ENCODE measurements at regions of chr1 and their contacts with region 1.

Region 1: DNA sequence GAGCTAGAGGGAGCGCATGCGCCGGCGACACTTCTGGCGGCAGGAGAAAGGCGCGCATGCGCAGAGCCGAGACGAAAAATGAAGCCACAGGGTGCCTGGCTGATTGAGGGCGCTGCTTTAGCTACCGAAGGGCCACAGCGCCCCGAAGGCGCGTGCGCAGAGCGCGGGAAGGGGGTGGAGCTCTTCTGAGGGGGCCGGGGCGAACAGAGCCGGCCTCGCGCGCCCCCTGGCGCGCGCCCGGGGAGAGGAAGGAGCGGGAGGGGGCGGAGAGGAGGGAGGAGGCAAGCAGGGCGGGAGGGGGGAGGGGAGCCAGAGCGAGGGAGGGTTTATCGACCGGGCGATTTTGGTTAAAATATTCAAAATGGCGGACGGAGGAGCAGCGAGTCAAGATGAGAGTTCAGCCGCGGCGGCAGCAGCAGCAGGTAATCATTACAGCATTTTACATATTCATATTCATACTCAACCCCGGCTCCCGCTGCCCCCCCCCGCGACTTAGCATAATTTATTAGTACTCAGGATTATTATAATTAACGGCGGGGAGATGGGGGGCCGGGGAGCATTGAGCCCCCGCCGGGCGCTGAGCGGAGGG is at the start of gene POU2F1:
- DNase-seq: peak; percentile 99
- H3K4me3 Mint-ChIP-seq: peak within 1 kb of the TSS; percentile 98
- H3K27ac Mint-ChIP-seq: peak within 1 kb of the TSS; percentile 99
- H3K4me1 Mint-ChIP-seq: peaks cover 37% of the 10 kb centered on the region
- H3K27me3 Mint-ChIP-seq: peaks cover 2% of the 10 kb centered on the region
- total RNA-seq, gene POU2F1: 17.2 and 17.5 TPM in 2 replicates

Region 2: DNA sequence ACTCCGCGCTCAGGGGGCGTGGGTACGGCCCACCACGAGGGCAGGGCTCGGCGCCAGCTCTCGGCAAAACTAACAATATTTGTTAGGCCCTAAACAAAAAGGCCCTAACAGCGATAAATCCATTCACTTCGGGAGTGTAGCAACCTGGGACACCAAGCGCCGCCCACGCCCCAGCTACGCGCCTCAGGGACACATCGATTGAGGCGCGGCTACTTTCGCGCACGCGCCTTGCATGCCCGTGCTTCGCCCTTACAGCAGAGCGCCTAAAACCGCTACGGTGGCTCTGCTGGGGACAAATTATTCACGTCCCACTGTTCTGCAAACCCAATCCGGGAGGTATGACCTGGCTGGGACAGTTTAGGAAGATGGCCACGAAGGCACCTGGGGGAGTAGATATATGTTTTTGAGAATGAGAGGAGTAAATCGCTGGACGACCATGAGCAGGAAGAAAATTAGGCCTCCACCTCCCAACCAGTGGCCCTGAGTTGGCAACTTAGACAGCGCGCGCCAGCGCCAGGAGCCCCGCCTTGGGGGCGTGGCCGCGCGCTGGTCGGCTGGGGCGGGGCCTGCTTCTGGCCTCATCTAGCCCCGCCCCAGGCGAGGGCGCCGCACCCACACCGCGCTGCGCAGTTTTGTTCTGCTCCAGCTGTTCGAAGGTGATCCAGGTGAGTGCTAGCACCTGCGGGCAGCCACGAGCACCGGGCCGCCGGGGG is 1589.8 kb before region 1 on chr1 and contains the start of gene MGST3:
- intact Hi-C with region 1: loop called (anchors 2 kb)
- DNase-seq: peak; percentile 98
- H3K4me3 Mint-ChIP-seq: no peak within 1 kb of the TSS
- H3K27ac Mint-ChIP-seq: no peak within 1 kb of the TSS
- H3K4me1 Mint-ChIP-seq: peaks cover 17% of the 10 kb centered on the region
- H3K27me3 Mint-ChIP-seq: peaks cover 10% of the 10 kb centered on the region
- total RNA-seq, gene MGST3: 25.7 and 28.1 TPM in 2 replicates

Region 3: GRCh38 chr1:166975361-166976129 is 245.1 kb before region 1 on chr1 and contains the start of gene ILDR2:
- intact Hi-C with region 1: loop called (anchors 5 kb)
- DNase-seq: peak; percentile 87
- H3K4me3 Mint-ChIP-seq: peak within 1 kb of the TSS; percentile 96
- H3K27ac Mint-ChIP-seq: peak within 1 kb of the TSS; percentile 96
- H3K4me1 Mint-ChIP-seq: peaks cover 47% of the 10 kb centered on the region
- H3K27me3 Mint-ChIP-seq: peaks cover 32% of the 10 kb centered on the region
- total RNA-seq, gene ILDR2: 10.3 and 12.5 TPM in 2 replicates

Region 4: DNA sequence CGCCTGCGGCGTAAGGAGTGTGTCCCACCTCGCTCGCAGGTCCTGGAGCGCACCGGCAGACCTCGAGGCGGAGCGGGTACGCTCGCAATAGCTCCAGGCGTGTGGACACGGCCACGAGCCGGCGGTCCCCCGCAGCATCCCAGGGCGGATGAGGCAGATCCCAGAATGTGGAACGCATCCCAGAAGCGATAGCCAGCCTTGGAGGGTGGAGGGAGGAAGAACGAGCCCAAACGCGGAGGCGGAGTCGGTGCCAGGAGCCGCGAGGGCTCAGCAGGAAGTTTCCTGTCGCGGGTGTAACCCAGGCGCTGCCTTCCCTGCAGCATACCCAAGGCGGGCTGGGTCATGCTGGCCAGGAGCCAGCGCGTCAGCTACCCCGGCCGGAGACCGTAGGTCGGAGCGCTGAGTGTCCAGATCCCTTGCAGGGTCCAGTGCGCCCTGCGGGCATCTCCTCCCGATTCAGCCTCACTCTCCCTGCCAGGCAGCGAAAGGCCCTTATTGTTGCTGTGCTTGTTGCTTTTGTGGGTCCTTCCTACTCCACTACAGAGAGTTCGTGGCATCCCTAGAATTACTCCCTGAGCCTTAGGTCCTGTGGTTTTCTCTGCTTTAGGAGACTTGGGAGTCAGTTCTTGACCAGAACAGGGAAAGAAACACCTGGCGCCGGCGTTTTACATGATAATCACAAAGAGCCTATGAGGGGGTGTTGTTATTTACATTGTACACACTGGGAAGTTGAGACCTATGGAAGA is 99.1 kb before region 1 on chr1:
- intact Hi-C with region 1: loop called (anchors 5 kb)
- DNase-seq: peak; percentile 78
- H3K4me3 Mint-ChIP-seq: peak overlapping the region; percentile 86
- H3K27ac Mint-ChIP-seq: no peak overlapping the region
- H3K4me1 Mint-ChIP-seq: peaks cover 6% of the 10 kb centered on the region
- H3K27me3 Mint-ChIP-seq: peaks cover 7% of the 10 kb centered on the region

Region 5: DNA sequence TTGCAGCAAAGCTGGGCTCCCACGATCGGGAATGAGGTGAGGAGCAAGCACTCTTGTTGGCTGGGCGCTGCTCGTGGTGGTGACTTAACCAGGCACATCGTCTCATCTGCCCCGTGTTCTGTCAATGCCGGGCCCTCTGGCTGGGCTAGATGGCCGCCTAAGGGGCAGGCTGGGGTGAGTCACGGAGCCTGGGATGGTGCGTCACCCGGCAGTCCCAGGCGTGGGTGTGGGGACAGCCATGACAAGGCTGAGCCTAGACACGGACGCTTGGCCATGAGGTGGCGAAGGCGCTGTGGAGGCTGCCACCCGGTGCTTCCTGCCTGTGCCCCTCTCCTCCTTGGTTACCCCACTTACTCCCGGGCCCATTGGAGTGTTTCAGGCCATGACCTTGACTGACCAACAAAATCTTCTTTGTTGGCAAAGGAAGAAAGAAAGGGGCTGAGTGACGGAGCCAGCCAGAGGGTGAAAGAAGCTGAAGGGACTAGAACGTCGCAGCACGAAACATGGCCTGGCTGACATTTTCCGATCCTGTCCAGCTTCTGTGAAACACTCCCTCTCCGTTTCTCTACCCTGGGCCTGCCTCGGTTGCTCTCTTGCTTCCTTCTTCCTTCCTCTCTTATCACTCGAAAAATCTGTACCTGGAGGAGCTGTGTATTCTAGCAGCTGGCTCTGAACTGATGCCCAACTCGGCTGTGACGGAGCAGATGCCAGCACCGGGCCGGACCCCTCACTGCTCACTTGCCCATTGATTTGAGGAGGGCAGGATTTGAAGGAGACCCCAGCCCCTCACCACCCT is 297.1 kb after region 1 on chr1:
- intact Hi-C with region 1: loop called (anchors 1 kb)
- DNase-seq: peak; percentile 93
- H3K4me3 Mint-ChIP-seq: peak overlapping the region; percentile 99
- H3K27ac Mint-ChIP-seq: peak overlapping the region; percentile 100
- H3K4me1 Mint-ChIP-seq: peaks cover 39% of the 10 kb centered on the region
- H3K27me3 Mint-ChIP-seq: peaks cover 7% of the 10 kb centered on the region

Region 6: GRCh38 chr1:167715157-167715999 is 494.7 kb after region 1 on chr1:
- intact Hi-C with region 1: loop called (anchors 10 kb)
- DNase-seq: peak; percentile 97
- H3K4me3 Mint-ChIP-seq: peak overlapping the region; percentile 96
- H3K27ac Mint-ChIP-seq: peak overlapping the region; percentile 98
- H3K4me1 Mint-ChIP-seq: peaks cover 56% of the 10 kb centered on the region
- H3K27me3 Mint-ChIP-seq: peaks cover 13% of the 10 kb centered on the region

Measured in activated CD4-positive, alpha-beta T cell treated with anti-CD3 and anti-CD28 coated beads, Interleukin-2, amount 10 ng/mL, durations not matched to agents 24 days and 14 days (primary cell).